Heart left ventricle (tissue), 16 donors: ENCODE measurements at regions of chr2 and their contacts with region 1.

Region 1: GRCh38 chr2:187581125-187581896 is 27.1 kb upstream of the TFPI start:
- DNase-seq: no peak
- ATAC-seq: peak in 1 of 4 donors; percentile 59
- H3K4me3 ChIP-seq: peak overlapping the region in 10 of 12 donors; percentile 9 to 54 (median 31)
- H3K27ac ChIP-seq: peak overlapping the region in 1 of 12 donors; percentile 16
- H3K4me1 ChIP-seq: peaks cover 0 to 20% (median 5%) of the 10 kb centered on the region in 12 donors
- H3K27me3 ChIP-seq: no peaks in the 10 kb centered on the region
- CTCF ChIP-seq: peak; percentile 48 to 78 (median 64)
- POLR2A ChIP-seq: no peak

Region 2: GRCh38 chr2:186862869-186863709 is 718.2 kb before region 1 on chr2:
- intact Hi-C with region 1: loop called in 3 of 10 experiments (anchors 10 kb)
- DNase-seq: no peak
- ATAC-seq: peak in 2 of 4 donors; percentile 59 to 63
- H3K4me3 ChIP-seq: no peak overlapping the region
- H3K27ac ChIP-seq: no peak overlapping the region
- H3K4me1 ChIP-seq: peaks cover 0 to 7% (median 0%) of the 10 kb centered on the region in 12 donors
- H3K27me3 ChIP-seq: no peaks in the 10 kb centered on the region
- CTCF ChIP-seq: peak; percentile 58 to 86 (median 70)
- POLR2A ChIP-seq: no peak

Region 3: GRCh38 chr2:187299122-187299906 is 282.0 kb before region 1 on chr2:
- intact Hi-C with region 1: no loop called
- DNase-seq: peak in 1 of 5 donors; percentile 40
- ATAC-seq: no peak
- H3K4me3 ChIP-seq: no peak overlapping the region
- H3K27ac ChIP-seq: peak overlapping the region in 3 of 12 donors; percentile 5 to 36 (median 24)
- H3K4me1 ChIP-seq: peaks cover 0 to 24% (median 5%) of the 10 kb centered on the region in 12 donors
- H3K27me3 ChIP-seq: no peaks in the 10 kb centered on the region
- CTCF ChIP-seq: peak; percentile 11 to 60 (median 38)
- POLR2A ChIP-seq: no peak

Region 4: GRCh38 chr2:187475499-187476248 is 105.6 kb before region 1 on chr2:
- intact Hi-C with region 1: no loop called
- DNase-seq: no peak
- ATAC-seq: no peak
- H3K4me3 ChIP-seq: no peak overlapping the region
- H3K27ac ChIP-seq: peak overlapping the region in 1 of 12 donors; percentile 33
- H3K4me1 ChIP-seq: peaks cover 0 to 12% (median 6%) of the 10 kb centered on the region in 12 donors
- H3K27me3 ChIP-seq: no peaks in the 10 kb centered on the region
- CTCF ChIP-seq: no peak
- POLR2A ChIP-seq: no peak

Region 5: GRCh38 chr2:187644981-187645380 is 63.7 kb after region 1 on chr2:
- intact Hi-C with region 1: no loop called
- DNase-seq: no peak
- ATAC-seq: no peak
- H3K4me3 ChIP-seq: no peak overlapping the region
- H3K27ac ChIP-seq: no peak overlapping the region
- H3K4me1 ChIP-seq: no peaks in the 10 kb centered on the region
- H3K27me3 ChIP-seq: no peaks in the 10 kb centered on the region
- CTCF ChIP-seq: no peak
- POLR2A ChIP-seq: no peak

Region 6: GRCh38 chr2:187783444-187783843 is 202.1 kb after region 1 on chr2:
- intact Hi-C with region 1: no loop called
- DNase-seq: no peak
- ATAC-seq: no peak
- H3K4me3 ChIP-seq: no peak overlapping the region
- H3K27ac ChIP-seq: no peak overlapping the region
- H3K4me1 ChIP-seq: no peaks in the 10 kb centered on the region
- H3K27me3 ChIP-seq: no peaks in the 10 kb centered on the region
- CTCF ChIP-seq: no peak
- POLR2A ChIP-seq: no peak

Region 7: GRCh38 chr2:187842978-187843847 is 261.9 kb after region 1 on chr2:
- intact Hi-C with region 1: loop called in 6 of 10 experiments (anchors 5 to 10 kb)
- DNase-seq: no peak
- ATAC-seq: no peak
- H3K4me3 ChIP-seq: no peak overlapping the region
- H3K27ac ChIP-seq: no peak overlapping the region
- H3K4me1 ChIP-seq: no peaks in the 10 kb centered on the region
- H3K27me3 ChIP-seq: no peaks in the 10 kb centered on the region
- CTCF ChIP-seq: peak; percentile 23 to 64 (median 46)
- POLR2A ChIP-seq: no peak

Region 8: GRCh38 chr2:188506843-188507242 is 925.5 kb after region 1 on chr2:
- intact Hi-C with region 1: loop called in 7 of 10 experiments (anchors 5 to 10 kb)
- DNase-seq: no peak
- ATAC-seq: no peak
- H3K4me3 ChIP-seq: no peak overlapping the region
- H3K27ac ChIP-seq: no peak overlapping the region
- H3K4me1 ChIP-seq: no peaks in the 10 kb centered on the region
- H3K27me3 ChIP-seq: no peaks in the 10 kb centered on the region
- CTCF ChIP-seq: no peak
- POLR2A ChIP-seq: no peak

Region 9: GRCh38 chr2:189412330-189412953 is 1831.1 kb after region 1 on chr2:
- intact Hi-C with region 1: loop called in 4 of 10 experiments (anchors 5 to 10 kb)
- DNase-seq: peak in 1 of 5 donors; percentile 23
- ATAC-seq: peak in 3 of 4 donors; percentile 50 to 72 (median 54)
- H3K4me3 ChIP-seq: no peak overlapping the region
- H3K27ac ChIP-seq: peak overlapping the region in 7 of 12 donors; percentile 2 to 73 (median 45)
- H3K4me1 ChIP-seq: peaks cover 0 to 18% (median 1%) of the 10 kb centered on the region in 12 donors
- H3K27me3 ChIP-seq: no peaks in the 10 kb centered on the region
- CTCF ChIP-seq: peak; percentile 55 to 84 (median 72)
- POLR2A ChIP-seq: no peak